Upper lobe of right lung (tissue), 1 donor: ENCODE measurements at regions of chr16 and their contacts with region 1.

Region 1: DNA sequence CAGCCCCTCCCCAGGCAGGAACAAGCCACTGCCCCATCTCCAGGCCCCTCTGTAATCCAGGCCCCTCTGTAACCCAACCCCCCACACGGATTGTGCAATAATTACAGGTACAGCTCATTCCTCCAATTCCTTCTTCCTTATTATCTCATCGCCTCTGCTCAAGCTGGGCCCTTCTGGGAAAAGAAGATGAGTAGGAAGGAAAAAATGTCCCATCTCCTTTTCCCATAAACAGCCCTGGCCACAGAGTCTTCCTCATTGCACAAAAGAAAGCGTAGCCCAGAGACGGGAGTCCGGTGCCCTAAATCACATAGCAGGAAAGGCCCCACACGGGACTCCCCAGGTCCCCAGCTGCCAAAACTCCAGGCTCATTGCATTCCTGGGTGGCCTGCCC is 3.6 kb upstream of the LITAFD start:
- DNase-seq: no peak
- ATAC-seq: no peak
- H3K4me3 ChIP-seq: no peak overlapping the region
- H3K27ac ChIP-seq: no peak overlapping the region
- H3K4me1 ChIP-seq: peaks cover 4% of the 10 kb centered on the region
- H3K27me3 ChIP-seq: peaks cover 13% of the 10 kb centered on the region
- CTCF ChIP-seq: no peak

Region 2: DNA sequence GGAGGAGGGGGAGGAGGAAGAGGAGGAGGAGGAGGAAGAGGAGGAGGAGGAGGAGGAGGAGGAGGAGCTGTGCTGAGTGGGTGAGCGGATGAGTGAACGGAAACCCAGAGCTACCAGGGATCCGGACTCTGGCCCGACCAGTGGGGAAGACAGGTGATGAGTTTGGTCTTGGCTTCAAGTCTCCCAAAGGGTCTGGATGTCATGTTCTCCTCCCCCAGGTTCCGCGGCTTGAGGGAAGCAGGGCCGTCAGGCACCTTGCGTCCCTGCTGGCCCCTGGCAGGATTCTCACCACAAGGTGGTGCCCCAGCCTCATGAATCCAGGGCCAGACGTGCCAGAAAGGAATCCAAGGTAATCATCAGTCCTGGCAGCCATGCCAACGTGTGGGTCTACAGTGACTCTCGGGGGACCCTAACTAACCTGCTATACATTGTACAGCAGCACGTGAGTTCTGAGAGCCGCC is 217.6 kb before region 1 on chr16:
- intact Hi-C with region 1: loop called (anchors 10 kb)
- DNase-seq: peak; percentile 75
- ATAC-seq: peak; percentile 88
- H3K4me3 ChIP-seq: no peak overlapping the region
- H3K27ac ChIP-seq: no peak overlapping the region
- H3K4me1 ChIP-seq: no peaks in the 10 kb centered on the region
- H3K27me3 ChIP-seq: no peaks in the 10 kb centered on the region
- CTCF ChIP-seq: peak; percentile 71

Region 3: DNA sequence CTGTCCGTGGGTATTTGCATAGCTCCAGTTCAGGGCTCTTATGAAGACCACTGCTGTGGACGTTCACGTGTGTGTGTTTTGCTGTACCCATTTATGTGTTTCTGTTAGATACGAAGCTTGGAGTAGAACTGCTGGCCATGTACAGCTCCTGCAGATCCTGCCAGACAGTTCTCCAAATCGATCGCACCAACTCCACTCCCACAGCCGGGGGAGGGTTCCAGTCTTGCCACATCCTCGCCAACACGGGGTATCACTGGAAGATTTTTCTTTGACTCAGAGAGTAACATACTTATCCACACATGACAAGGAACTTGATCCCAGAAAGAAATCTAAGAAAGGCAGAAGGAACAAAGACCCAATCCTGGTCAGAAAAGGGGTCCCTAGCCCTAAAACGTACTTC is 118.5 kb before region 1 on chr16:
- intact Hi-C with region 1: no loop called
- DNase-seq: no peak
- ATAC-seq: no peak
- H3K4me3 ChIP-seq: no peak overlapping the region
- H3K27ac ChIP-seq: no peak overlapping the region
- H3K4me1 ChIP-seq: no peaks in the 10 kb centered on the region
- H3K27me3 ChIP-seq: no peaks in the 10 kb centered on the region
- CTCF ChIP-seq: no peak

Region 4: DNA sequence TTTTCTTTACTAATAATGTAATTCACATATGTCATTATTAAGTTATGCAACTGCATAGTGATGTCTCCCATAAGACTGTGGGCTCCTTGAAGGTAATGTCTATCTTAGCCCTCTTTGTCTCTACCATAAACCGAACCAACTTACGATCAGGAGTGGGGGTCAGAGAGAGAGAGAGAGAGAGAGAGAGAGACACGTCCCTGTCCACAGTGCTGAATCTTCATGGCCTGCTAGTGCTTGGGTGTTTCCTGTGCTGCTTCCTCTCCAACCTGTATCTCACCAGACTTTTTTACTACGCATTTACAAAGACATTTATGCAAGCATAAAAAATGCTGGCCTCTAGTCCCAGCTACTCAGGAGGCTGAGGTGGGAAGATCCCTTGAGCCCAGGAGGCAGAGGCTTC is 160.7 kb after region 1 on chr16:
- intact Hi-C with region 1: no loop called
- DNase-seq: no peak
- ATAC-seq: no peak
- H3K4me3 ChIP-seq: no peak overlapping the region
- H3K27ac ChIP-seq: no peak overlapping the region
- H3K4me1 ChIP-seq: no peaks in the 10 kb centered on the region
- H3K27me3 ChIP-seq: no peaks in the 10 kb centered on the region
- CTCF ChIP-seq: no peak